Transverse colon (tissue), 4 donors: ENCODE measurements at regions of chr5 and their contacts with region 1.

Region 1: DNA sequence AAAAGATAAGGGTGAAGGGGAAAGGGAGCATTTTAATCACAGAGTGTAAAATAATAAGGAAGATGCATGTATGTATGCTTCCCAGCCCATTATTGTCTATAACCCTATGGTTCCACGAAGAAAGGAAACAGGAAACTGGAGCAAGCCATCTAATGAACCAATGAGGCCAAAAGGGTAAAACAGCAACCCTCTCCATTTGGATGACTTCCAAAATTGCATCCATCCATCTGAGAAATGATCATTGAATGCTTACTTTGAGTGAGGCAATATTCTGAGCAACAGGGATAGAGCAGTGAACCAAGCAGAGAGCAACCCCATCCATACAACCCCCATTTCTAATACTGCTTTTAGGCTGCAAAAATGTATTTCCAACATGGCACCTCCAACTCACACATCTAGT is 46.9 kb downstream of the ARL15 start:
- DNase-seq: no peak
- H3K4me3 ChIP-seq: no peak overlapping the region
- H3K27ac ChIP-seq: no peak overlapping the region
- H3K4me1 ChIP-seq: no peaks in the 10 kb centered on the region
- H3K27me3 ChIP-seq: no peaks in the 10 kb centered on the region
- CTCF ChIP-seq: no peak
- EP300 ChIP-seq: no peak
- POLR2A ChIP-seq: no peak

Region 2: DNA sequence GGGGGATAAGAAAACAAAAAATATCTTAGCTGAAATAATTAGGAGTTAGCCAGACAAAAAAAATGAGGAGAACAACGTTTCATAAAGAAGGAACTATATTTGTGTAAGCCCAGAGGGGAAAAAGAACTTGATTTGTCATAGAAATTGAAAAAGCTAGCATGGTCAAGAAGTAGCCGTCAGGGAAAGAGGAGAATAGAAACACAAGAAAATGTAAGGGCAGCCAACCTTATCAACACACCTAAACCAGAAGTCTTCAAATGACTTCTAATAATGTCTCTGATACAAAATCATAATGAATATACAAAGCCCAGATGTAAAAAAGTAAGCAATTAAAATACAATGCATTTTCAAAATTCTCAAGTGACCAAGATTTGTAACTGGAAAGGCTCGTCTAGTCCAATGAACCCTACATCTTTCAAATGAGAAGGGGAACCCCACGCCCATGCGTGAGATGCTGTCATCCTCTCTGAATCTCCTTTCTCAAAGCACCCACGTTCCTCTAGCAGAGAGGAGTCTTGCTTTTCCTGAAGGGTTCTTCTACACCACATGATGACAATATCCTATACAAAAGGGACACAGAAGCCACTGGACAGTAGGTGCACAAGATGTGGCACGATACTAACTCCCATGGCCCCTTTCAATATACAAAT is 56.7 kb before region 1 on chr5:
- in situ Hi-C with region 1: no loop called
- intact Hi-C with region 1: no loop called
- DNase-seq: no peak
- H3K4me3 ChIP-seq: no peak overlapping the region
- H3K27ac ChIP-seq: no peak overlapping the region
- H3K4me1 ChIP-seq: no peaks in the 10 kb centered on the region
- H3K27me3 ChIP-seq: no peaks in the 10 kb centered on the region
- CTCF ChIP-seq: no peak
- EP300 ChIP-seq: no peak
- POLR2A ChIP-seq: no peak

Region 3: GRCh38 chr5:54646356-54647101 is 383.1 kb after region 1 on chr5:
- in situ Hi-C with region 1: no loop called
- intact Hi-C with region 1: no loop called
- DNase-seq: peak; percentile 72
- H3K4me3 ChIP-seq: no peak overlapping the region
- H3K27ac ChIP-seq: peak overlapping the region; percentile 59 to 84 (median 77)
- H3K4me1 ChIP-seq: peaks cover 0 to 11% (median 5%) of the 10 kb centered on the region in 4 donors
- H3K27me3 ChIP-seq: no peaks in the 10 kb centered on the region
- CTCF ChIP-seq: peak in 1 of 5 experiments; percentile 16
- EP300 ChIP-seq: no peak
- POLR2A ChIP-seq: no peak

Region 4: DNA sequence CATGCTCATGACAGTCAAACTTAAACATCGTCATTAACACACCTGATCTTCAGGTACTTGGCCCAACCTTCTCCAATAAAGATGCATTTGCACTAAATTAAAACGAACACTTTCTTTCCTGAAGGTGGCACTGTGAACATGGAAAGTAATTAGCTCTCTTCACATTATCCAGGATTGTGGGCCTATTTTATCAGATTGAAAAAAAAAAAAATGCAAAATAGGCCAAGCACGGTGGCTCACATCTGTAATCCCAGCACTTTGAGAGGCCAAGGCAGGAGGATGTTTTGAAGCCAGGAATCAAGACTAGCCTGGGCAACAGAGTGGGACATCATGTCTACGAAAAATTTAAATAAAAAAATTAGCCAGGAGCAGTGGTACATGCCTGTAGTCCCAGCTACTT is 923.9 kb after region 1 on chr5:
- in situ Hi-C with region 1: no loop called
- intact Hi-C with region 1: no loop called
- DNase-seq: no peak
- H3K4me3 ChIP-seq: no peak overlapping the region
- H3K27ac ChIP-seq: no peak overlapping the region
- H3K4me1 ChIP-seq: no peaks in the 10 kb centered on the region
- H3K27me3 ChIP-seq: peaks cover 95% of the 10 kb centered on the region
- CTCF ChIP-seq: peak in 3 of 5 experiments; percentile 24 to 35 (median 28)
- EP300 ChIP-seq: no peak
- POLR2A ChIP-seq: no peak

Region 5: DNA sequence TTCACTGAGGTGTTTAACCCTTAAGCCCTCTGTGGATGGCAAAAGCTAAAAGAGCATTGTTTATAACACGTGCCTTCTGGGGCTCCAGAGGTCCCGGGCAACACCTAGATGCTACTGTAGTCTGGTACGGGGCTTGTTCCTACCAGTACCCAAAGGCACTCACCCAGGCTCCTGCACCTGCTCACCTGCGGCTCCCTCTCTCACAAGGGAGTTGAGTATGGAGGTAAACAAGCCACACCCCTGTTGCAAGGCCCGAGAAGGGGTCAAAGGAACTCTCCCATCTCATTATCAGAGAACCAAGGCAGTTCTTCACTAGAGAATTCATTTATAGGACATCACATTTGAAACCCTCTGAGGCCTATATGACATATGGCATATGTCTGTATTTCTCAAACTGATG is 1784.7 kb after region 1 on chr5:
- in situ Hi-C with region 1: no loop called
- intact Hi-C with region 1: loop called (anchors 5 kb)
- DNase-seq: peak; percentile 23
- H3K4me3 ChIP-seq: no peak overlapping the region
- H3K27ac ChIP-seq: no peak overlapping the region
- H3K4me1 ChIP-seq: peaks cover 0 to 14% (median 2%) of the 10 kb centered on the region in 4 donors
- H3K27me3 ChIP-seq: no peaks in the 10 kb centered on the region
- CTCF ChIP-seq: no peak
- EP300 ChIP-seq: no peak
- POLR2A ChIP-seq: no peak